ENCODE measurements at regions of chr1 and their contacts with region 1.

Region 1: GRCh38 chr1:110645821-110646735 is 28.7 kb downstream of the KCNA3 start:
- DNase-seq: no peak
- H3K4me3 Mint-ChIP-seq: peak overlapping the region; percentile 56
- H3K27ac Mint-ChIP-seq: peak overlapping the region; percentile 81
- H3K4me1 Mint-ChIP-seq: peaks cover 53% of the 10 kb centered on the region
- H3K27me3 Mint-ChIP-seq: no peaks in the 10 kb centered on the region

Region 2: GRCh38 chr1:110630839-110631663 is 15.0 kb before region 1 on chr1:
- intact Hi-C with region 1: loop called (anchors 1 kb)
- DNase-seq: peak; percentile 84
- H3K4me3 Mint-ChIP-seq: no peak overlapping the region
- H3K27ac Mint-ChIP-seq: no peak overlapping the region
- H3K4me1 Mint-ChIP-seq: peaks cover 67% of the 10 kb centered on the region
- H3K27me3 Mint-ChIP-seq: no peaks in the 10 kb centered on the region

Region 3: DNA sequence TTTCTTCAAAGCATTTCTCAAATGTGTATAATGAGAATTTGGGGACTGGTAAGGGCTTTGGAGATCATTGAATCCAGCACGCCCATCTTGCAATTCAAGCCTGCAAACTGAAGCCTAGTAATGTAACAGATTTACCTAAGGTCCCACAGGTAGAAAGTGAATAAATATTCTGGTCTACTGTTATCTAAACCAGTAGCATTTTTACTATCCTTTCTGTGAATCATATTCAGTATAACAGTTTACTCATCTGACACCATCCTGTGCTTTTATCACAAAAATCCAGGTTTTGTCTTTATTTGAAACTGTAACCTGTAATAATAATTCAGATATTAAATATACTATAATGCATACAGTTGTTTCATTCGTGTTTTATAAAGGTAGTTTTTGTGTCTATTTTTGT is 11.3 kb after region 1 on chr1:
- intact Hi-C with region 1: loop called (anchors 1 kb)
- DNase-seq: no peak
- H3K4me3 Mint-ChIP-seq: no peak overlapping the region
- H3K27ac Mint-ChIP-seq: no peak overlapping the region
- H3K4me1 Mint-ChIP-seq: peaks cover 58% of the 10 kb centered on the region
- H3K27me3 Mint-ChIP-seq: no peaks in the 10 kb centered on the region

Region 4: GRCh38 chr1:110668549-110668948 is 22.5 kb after region 1 on chr1:
- intact Hi-C with region 1: loop called (anchors 1 kb)
- DNase-seq: no peak
- H3K4me3 Mint-ChIP-seq: peak overlapping the region; percentile 77
- H3K27ac Mint-ChIP-seq: peak overlapping the region; percentile 89
- H3K4me1 Mint-ChIP-seq: peaks cover 34% of the 10 kb centered on the region
- H3K27me3 Mint-ChIP-seq: no peaks in the 10 kb centered on the region

Measured in activated T-helper 1 cell treated with anti-CD3 and anti-CD28 coated beads, Interleukin-12 subunit alpha, Interleukin-12 subunit beta, Interleukin-2, Interleukin-4 antibody, amounts not matched to agents 30 ng/mL and 10 ng/mL and 1 ng/mL, durations not matched to agents 14 hours and 24 hours and 36 hours (primary cell).